ENCODE measurements at regions of chr1 and their contacts with region 1.

Region 1: GRCh38 chr1:184563308-184563707 is 176.5 kb downstream of the C1orf21 start:
- DNase-seq: peak; percentile 56
- H3K4me3 ChIP-seq: no peak overlapping the region
- H3K27ac ChIP-seq: no peak overlapping the region
- H3K4me1 ChIP-seq: peaks cover 20% of the 10 kb centered on the region
- H3K27me3 ChIP-seq: no peaks in the 10 kb centered on the region
- CTCF ChIP-seq: peak; percentile 79

Region 2: GRCh38 chr1:184212649-184213314 is 350.5 kb before region 1 on chr1:
- CTCF ChIA-PET with region 1: no interaction called
- POLR2A ChIA-PET with region 1: no interaction called
- intact Hi-C with region 1: loop called (anchors 10 kb)
- DNase-seq: peak; percentile 52
- H3K4me3 ChIP-seq: no peak overlapping the region
- H3K27ac ChIP-seq: no peak overlapping the region
- H3K4me1 ChIP-seq: no peaks in the 10 kb centered on the region
- H3K27me3 ChIP-seq: no peaks in the 10 kb centered on the region
- CTCF ChIP-seq: no peak

Region 3: DNA sequence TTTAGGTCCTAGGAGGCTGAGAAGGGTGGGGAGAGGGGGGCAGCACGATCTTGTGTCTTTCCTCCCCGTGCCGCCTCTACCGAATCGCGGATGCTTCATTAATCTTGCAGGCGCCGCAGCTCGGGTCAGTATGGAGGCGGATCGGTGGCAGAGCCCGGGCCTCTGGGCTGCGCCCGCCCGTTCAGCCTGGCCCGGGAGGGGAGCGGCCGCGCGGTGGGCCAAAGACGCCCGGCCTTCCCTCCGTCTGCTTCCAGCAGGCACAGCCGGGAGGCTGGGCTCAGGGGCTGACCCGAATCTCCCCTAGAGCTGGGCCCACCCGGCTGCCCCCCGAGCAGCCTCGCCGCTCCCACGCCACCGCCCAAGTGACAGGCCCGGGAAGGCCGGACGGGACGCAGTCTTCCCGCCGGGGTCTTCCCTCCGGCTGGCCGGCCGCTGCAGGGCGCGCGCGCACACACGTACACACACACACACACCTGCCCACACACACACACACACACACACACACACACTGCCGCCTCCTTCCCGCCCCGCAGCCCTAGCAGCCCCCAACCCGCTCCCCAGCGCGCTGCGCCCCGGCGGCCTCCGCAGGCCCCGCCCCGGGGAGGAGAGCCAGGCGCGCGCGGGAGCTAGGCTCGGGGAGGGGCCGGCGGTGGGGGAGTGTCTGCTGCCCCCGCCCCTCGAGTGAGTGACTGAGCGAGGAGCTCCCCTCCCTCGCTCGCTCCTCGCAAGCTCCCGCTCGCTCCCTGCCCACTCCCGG is 176.8 kb before region 1 on chr1 and contains the start of gene C1orf21:
- CTCF ChIA-PET with region 1: no interaction called
- POLR2A ChIA-PET with region 1: interaction called, 13 read pairs
- intact Hi-C with region 1: loop called (anchors 1 kb)
- DNase-seq: peak; percentile 96
- H3K4me3 ChIP-seq: peak within 1 kb of the TSS; percentile 95
- H3K27ac ChIP-seq: peak within 1 kb of the TSS; percentile 79
- H3K4me1 ChIP-seq: peaks cover 25% of the 10 kb centered on the region
- H3K27me3 ChIP-seq: no peaks in the 10 kb centered on the region
- CTCF ChIP-seq: no peak
- total RNA-seq, gene C1orf21: 31.3 and 34.3 TPM in 2 replicates